ENCODE measurements at regions of chr19 and their contacts with region 1.

Region 1: GRCh38 chr19:41785653-41786052 is 10.7 kb upstream of the CEACAM3 start:
- DNase-seq: peak; percentile 88
- ATAC-seq: peak; percentile 98
- H3K4me3 Mint-ChIP-seq: no peak overlapping the region
- H3K27ac Mint-ChIP-seq: no peak overlapping the region
- H3K4me1 Mint-ChIP-seq: peaks cover 14% of the 10 kb centered on the region
- H3K27me3 Mint-ChIP-seq: peaks cover 50% of the 10 kb centered on the region
- CTCF ChIP-seq: peak; percentile 94

Region 2: GRCh38 chr19:41775360-41775695 is 10.3 kb before region 1 on chr19:
- CTCF ChIA-PET with region 1: interaction called, 29 read pairs
- POLR2A ChIA-PET with region 1: no interaction called
- intact Hi-C with region 1: no loop called
- DNase-seq: no peak
- ATAC-seq: no peak
- H3K4me3 Mint-ChIP-seq: no peak overlapping the region
- H3K27ac Mint-ChIP-seq: no peak overlapping the region
- H3K4me1 Mint-ChIP-seq: peaks cover 30% of the 10 kb centered on the region
- H3K27me3 Mint-ChIP-seq: peaks cover 66% of the 10 kb centered on the region
- CTCF ChIP-seq: no peak

Region 3: GRCh38 chr19:41801792-41802211 is 16.1 kb after region 1 on chr19:
- CTCF ChIA-PET with region 1: interaction called, 15 read pairs
- POLR2A ChIA-PET with region 1: interaction called, 3 read pairs
- intact Hi-C with region 1: no loop called
- DNase-seq: no peak
- ATAC-seq: no peak
- H3K4me3 Mint-ChIP-seq: no peak overlapping the region
- H3K27ac Mint-ChIP-seq: no peak overlapping the region
- H3K4me1 Mint-ChIP-seq: peaks cover 21% of the 10 kb centered on the region
- H3K27me3 Mint-ChIP-seq: peaks cover 1% of the 10 kb centered on the region
- CTCF ChIP-seq: no peak

Region 4: DNA sequence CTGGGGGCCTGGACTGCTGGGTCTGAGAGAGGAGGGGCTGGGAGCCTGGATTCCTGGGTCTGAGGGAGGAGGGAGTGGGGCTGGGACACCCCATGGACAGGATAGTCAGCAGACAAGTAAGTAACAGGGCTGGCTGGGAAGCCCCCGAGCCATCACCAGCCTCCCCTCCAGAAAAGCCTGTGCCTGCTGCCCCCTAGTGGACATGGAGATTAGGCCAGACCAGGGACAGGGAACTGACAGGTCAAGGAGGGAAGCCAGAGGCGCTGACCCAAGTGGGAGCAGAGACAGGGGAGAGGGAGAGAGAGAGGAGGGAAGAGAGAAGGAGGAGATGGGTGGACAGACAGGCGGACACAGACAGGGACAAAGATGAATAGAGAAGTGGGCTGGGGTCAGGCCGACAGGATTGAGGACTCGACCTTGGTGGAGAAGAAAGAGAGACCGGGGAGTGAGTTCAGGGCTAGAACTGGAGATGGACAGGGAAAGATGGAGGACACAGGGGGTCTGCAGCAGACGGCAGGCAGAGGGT is 149.3 kb after region 1 on chr19:
- CTCF ChIA-PET with region 1: no interaction called
- POLR2A ChIA-PET with region 1: no interaction called
- intact Hi-C with region 1: no loop called
- DNase-seq: peak; percentile 90
- ATAC-seq: peak; percentile 78
- H3K4me3 Mint-ChIP-seq: no peak overlapping the region
- H3K27ac Mint-ChIP-seq: peak overlapping the region; percentile 71
- H3K4me1 Mint-ChIP-seq: peaks cover 47% of the 10 kb centered on the region
- H3K27me3 Mint-ChIP-seq: peaks cover 16% of the 10 kb centered on the region
- CTCF ChIP-seq: peak; percentile 95